ENCODE measurements at regions of chr1 and their contacts with region 1.

Region 1: DNA sequence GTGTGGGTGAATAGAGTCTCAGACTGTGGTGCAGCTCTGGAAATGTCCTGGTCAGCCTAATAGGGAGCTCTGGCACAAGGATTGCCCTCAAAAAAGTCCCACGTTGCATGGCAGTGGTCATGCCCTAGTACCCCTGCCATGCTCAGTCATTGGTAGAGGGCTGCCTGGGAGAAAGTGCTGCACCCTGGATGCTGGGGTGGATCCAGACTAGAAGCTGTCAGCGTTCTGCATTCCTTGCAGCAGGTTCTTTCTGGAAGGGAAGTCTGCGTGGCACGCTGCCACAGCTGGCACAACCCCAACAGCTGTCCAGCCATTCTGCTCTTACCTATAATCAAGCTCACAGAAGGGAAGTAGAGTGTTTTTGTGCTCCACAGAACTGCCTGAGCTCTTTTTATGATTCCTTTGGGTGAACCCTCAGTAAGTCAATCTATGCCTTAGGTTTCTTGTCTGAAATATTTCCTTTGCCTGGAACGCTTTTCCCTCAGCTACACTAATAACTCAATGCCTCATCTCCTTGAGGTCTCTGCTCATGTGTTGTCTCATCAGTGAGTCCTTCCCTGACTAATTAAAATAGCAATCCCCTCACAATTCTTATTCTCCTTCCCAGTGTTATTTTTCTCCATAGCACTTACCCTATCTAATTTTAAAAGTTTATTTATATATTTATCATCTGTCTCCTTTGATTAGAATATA is 61.5 kb upstream of the JAK1 start:
- DNase-seq: no peak
- ATAC-seq: no peak
- H3K4me3 ChIP-seq: no peak overlapping the region
- H3K4me3 Mint-ChIP-seq: no peak overlapping the region
- H3K27ac ChIP-seq: no peak overlapping the region
- H3K27ac Mint-ChIP-seq: no peak overlapping the region
- H3K4me1 ChIP-seq: no peaks in the 10 kb centered on the region
- H3K4me1 Mint-ChIP-seq: peaks cover 29% of the 10 kb centered on the region
- H3K27me3 ChIP-seq: no peaks in the 10 kb centered on the region
- H3K27me3 Mint-ChIP-seq: no peaks in the 10 kb centered on the region
- CTCF ChIP-seq: no peak

Region 2: DNA sequence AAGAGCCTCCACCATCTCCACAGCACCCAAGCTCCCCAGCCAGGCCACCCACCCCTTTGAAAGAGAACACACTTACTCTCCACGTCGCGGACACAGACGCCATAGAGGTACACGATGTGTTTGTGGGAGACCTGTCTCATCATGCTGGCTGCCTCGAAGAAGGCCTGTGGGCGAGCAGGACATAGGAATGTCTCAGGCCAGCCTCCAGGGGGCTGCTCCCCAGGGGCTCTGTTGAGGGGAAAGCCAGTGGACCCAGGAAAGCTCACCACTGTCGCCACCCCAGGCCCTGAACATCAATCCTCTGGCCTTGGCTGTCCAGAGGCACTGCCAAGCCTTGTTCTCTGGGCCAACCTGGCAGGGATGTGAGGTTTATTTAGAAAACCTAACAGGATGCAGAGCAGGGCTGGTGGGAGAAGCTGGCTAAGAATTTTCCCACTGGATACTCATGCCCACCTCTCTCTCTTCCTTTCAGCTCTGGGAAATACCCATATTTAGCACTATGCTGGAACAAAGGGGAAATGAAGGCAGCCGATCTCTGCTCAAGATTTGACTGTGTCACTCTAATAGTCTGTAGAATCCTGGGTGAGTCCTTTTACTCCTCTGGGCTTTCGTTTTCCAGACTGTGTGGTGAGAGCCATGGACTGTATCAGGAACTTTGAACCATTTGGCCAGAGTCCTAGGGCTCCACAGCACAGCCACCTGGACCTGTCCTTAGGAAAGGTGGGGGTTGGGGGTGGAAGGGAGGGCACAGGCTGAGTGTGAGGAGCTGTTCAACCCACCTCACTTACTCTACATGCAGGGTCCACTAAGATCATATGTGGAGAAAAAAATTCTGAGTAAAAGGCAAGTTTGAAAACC is 181.0 kb before region 1 on chr1:
- CTCF ChIA-PET with region 1: no interaction called
- POLR2A ChIA-PET with region 1: no interaction called
- intact Hi-C with region 1: loop called in 1 of 2 experiments (anchors 5 kb)
- DNase-seq: no peak
- ATAC-seq: peak; percentile 17
- H3K4me3 ChIP-seq: no peak overlapping the region
- H3K4me3 Mint-ChIP-seq: no peak overlapping the region
- H3K27ac ChIP-seq: no peak overlapping the region
- H3K27ac Mint-ChIP-seq: peak overlapping the region; percentile 27
- H3K4me1 ChIP-seq: no peaks in the 10 kb centered on the region
- H3K4me1 Mint-ChIP-seq: no peaks in the 10 kb centered on the region
- H3K27me3 ChIP-seq: no peaks in the 10 kb centered on the region
- H3K27me3 Mint-ChIP-seq: no peaks in the 10 kb centered on the region
- CTCF ChIP-seq: no peak